Heart right ventricle (tissue), 16 donors: ENCODE measurements at regions of chr2 and their contacts with region 1.

Region 1: DNA sequence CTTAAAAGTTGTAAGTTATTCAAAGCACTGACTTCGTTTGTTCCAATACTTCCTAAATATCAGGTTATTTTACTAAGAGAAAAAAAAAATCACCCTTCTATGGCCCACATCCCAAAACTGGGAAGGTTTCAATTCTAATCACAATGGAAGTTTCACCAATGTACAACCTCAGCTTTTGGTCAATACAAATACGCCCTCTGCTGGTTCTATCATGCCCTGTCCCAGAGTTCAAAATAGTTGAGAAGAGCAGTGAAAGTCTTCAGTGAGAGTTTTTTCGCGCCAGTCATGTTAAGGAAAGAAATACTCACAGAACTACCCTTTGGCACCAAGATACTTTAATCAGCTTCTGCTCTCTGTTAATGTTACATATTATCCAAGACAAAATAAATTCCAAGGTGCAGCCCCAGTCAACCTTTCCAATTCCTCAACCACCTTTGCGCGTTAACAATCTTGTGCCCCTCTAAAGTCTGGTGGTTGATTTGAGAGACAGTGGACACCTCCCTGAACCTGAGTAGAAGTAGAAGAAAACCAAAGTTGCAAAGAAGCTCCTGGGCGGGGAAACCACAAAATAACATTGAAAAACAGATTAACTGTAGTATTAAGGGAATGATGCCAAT is 59.9 kb downstream of the SUMO1 start:
- DNase-seq: peak in 1 of 2 donors; percentile 55
- ATAC-seq: peak in 7 of 8 donors; percentile 75 to 90 (median 83)
- H3K4me3 ChIP-seq: no peak overlapping the region
- H3K27ac ChIP-seq: no peak overlapping the region
- H3K4me1 ChIP-seq: no peaks in the 10 kb centered on the region
- H3K27me3 ChIP-seq: no peaks in the 10 kb centered on the region
- CTCF ChIP-seq: peak; percentile 54 to 92 (median 88)

Region 2: DNA sequence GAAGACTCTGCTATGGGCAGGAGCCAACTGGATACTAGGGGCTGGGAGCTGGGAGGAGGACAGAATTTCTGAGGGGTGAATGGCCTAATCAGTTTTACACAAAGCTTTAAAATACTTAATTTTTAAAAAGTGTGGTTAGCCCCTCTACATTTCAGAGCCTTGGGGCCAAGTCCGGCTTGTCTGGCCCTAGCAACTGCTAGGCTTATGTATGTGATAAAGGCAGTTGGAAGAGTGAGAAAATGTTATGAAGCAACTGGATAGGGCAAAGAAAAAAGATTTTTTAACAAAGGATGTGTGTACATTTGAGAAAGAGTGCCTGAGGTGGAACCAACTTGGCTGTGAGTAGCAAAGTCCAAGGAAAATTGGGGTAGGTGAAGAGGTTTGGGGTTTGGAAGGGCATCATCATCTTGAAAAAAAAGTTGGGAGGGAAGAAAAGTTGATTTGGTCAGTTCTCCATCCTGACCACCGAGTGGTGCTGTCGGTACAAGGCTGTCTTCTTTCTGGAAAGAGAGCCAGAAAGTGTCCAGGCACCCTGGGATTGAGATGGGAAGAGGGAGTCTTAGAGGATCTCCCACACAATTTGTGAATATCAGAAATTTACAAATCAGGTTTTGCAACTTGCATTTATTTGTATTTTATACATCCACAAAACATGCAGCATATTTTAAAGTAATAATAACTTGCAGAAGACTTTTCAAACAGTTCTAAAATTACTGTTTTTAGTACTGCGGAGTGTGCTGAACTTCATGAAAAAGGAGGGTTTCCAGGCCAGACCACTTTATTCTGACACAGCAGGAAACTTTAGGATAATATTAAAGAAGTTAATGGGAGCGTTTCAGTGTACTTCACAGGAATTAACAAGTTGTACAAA is 382.6 kb before region 1 on chr2:
- intact Hi-C with region 1: loop called (anchors 2 to 10 kb)
- DNase-seq: peak in 1 of 2 donors; percentile 4
- ATAC-seq: peak in 5 of 8 donors; percentile 53 to 68 (median 62)
- H3K4me3 ChIP-seq: no peak overlapping the region
- H3K27ac ChIP-seq: no peak overlapping the region
- H3K4me1 ChIP-seq: no peaks in the 10 kb centered on the region
- H3K27me3 ChIP-seq: peaks cover 0 to 7% (median 0%) of the 10 kb centered on the region in 7 donors
- CTCF ChIP-seq: peak; percentile 40 to 73 (median 66)

Region 3: GRCh38 chr2:202039278-202040078 is 139.0 kb before region 1 on chr2:
- intact Hi-C with region 1: loop called in 7 of 10 experiments (anchors 5 to 10 kb)
- DNase-seq: no peak
- ATAC-seq: no peak
- H3K4me3 ChIP-seq: peak overlapping the region in 6 of 10 donors; percentile 11 to 87 (median 80)
- H3K27ac ChIP-seq: peak overlapping the region; percentile 27 to 86 (median 76)
- H3K4me1 ChIP-seq: peaks cover 10 to 50% (median 37%) of the 10 kb centered on the region in 9 donors
- H3K27me3 ChIP-seq: peaks cover 0 to 69% (median 49%) of the 10 kb centered on the region in 7 donors
- CTCF ChIP-seq: no peak

Region 4: DNA sequence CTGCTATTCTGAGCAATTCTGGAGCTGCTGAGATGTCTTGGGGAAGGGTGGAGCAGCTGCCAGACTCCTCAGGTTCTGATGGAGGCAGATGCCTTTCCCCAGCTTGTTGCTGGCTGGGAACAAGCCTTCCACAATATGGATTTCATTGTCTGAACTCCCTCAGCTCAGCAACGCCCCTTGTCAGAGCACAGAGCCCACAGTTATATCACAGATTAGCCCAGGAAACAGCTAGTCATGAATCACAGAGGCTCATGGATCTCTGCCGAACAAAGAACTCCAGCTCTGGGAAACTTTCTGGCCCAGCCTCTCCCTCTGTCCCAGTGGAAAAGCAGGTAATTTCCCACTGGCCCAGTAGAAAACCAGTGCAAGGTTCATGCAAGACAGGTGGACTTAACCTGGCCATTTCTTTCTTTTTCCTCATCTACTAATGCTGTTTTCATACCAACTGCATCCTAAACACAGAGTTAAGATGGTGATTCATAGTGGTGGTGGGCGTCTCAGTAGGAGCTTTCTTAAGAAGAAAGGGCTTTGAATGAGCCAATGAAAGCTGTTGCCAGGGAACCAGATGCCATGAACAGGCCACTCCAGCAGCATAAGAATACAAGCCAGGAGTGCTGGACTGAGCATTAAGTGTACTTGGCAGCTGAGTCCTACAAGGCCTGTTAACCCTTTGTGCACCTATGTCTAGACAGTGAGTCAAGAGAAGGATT is 114.1 kb before region 1 on chr2:
- intact Hi-C with region 1: loop called in 1 of 10 experiments (anchors 10 kb)
- DNase-seq: peak in 1 of 2 donors; percentile 11
- ATAC-seq: peak; percentile 66 to 90 (median 80)
- H3K4me3 ChIP-seq: no peak overlapping the region
- H3K27ac ChIP-seq: peak overlapping the region in 5 of 10 donors; percentile 1 to 23 (median 3)
- H3K4me1 ChIP-seq: peaks cover 0 to 17% (median 0%) of the 10 kb centered on the region in 9 donors
- H3K27me3 ChIP-seq: peaks cover 0 to 3% (median 0%) of the 10 kb centered on the region in 7 donors
- CTCF ChIP-seq: no peak

Region 5: GRCh38 chr2:202140522-202141252 is 37.8 kb before region 1 on chr2:
- intact Hi-C with region 1: no loop called
- DNase-seq: no peak
- ATAC-seq: no peak
- H3K4me3 ChIP-seq: no peak overlapping the region
- H3K27ac ChIP-seq: no peak overlapping the region
- H3K4me1 ChIP-seq: peaks cover 0 to 6% (median 0%) of the 10 kb centered on the region in 9 donors
- H3K27me3 ChIP-seq: no peaks in the 10 kb centered on the region
- CTCF ChIP-seq: no peak